HEK293 (cell line): ENCODE measurements at regions of chr6 and their contacts with region 1.

Region 1: DNA sequence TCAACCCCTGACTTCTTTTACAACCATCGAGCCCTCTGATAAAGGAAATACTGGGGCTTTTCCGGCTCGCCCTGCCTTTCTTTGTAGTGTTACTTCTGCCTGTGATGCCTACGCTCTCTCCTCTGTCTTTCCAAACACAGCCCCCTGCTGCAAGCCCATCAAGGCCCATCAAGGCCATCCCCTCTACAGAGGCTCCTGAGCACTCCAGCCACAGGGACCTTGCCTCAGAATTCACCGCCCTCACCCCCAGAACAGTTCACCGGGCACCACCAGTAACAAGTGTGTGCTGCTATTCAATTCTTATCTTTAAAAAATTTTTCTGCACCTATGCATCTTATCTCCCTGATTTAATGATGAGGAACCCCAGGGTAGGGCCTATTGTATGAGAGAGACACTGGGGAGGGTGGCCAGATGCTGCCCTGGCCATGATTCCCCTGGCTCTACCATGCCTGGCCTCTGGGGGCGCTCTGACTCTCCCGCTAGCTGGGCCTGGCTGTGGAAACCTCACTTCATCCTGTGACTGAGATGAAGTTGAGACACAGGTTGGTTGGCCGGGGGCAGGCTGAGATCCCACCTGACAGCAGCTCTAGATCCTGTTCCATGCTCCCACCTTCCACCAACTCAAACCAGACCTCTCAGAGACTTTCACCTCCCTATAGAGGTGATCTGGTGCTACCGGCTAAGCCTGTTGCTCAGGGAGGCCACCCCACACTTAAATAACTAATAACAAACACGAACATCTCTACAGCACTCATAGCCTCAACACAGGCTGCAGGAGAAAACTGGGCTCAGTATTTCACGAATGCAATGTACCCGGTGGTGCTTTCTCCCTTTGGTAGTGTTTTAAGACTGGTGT is 19.2 kb upstream of the GLP1R start:
- H3K4me3 ChIP-seq: no peak overlapping the region
- H3K27ac ChIP-seq: no peak overlapping the region
- H3K4me1 ChIP-seq: peaks cover 3% of the 10 kb centered on the region; the same call in 1 of the 2 replicates
- CTCF ChIP-seq: peak; percentile 54; the same call in 1 of the 2 replicates

Region 2: GRCh38 chr6:39018107-39018506 is 11.3 kb before region 1 on chr6:
- CTCF ChIA-PET with region 1: interaction called, 19 read pairs
- POLR2A ChIA-PET with region 1: no interaction called
- H3K4me3 ChIP-seq: no peak overlapping the region
- H3K27ac ChIP-seq: no peak overlapping the region
- H3K4me1 ChIP-seq: no peaks in the 10 kb centered on the region
- CTCF ChIP-seq: no peak

Region 3: GRCh38 chr6:39041072-39041471 is 11.7 kb after region 1 on chr6:
- CTCF ChIA-PET with region 1: interaction called, 21 read pairs
- POLR2A ChIA-PET with region 1: no interaction called
- H3K4me3 ChIP-seq: no peak overlapping the region
- H3K27ac ChIP-seq: no peak overlapping the region
- H3K4me1 ChIP-seq: no peaks in the 10 kb centered on the region
- CTCF ChIP-seq: no peak